Prostate gland (tissue), 2 donors: ENCODE measurements at regions of chr17 and their contacts with region 1.

Region 1: GRCh38 chr17:69607162-69607834 is 192.8 kb downstream of the MAP2K6 start:
- DNase-seq: peak; percentile 60
- H3K4me3 ChIP-seq: no peak overlapping the region
- H3K27ac ChIP-seq: no peak overlapping the region
- H3K4me1 ChIP-seq: no peaks in the 10 kb centered on the region
- H3K27me3 ChIP-seq: no peaks in the 10 kb centered on the region
- CTCF ChIP-seq: peak; percentile 65 to 87 (median 81)
- POLR2A ChIP-seq: no peak

Region 2: DNA sequence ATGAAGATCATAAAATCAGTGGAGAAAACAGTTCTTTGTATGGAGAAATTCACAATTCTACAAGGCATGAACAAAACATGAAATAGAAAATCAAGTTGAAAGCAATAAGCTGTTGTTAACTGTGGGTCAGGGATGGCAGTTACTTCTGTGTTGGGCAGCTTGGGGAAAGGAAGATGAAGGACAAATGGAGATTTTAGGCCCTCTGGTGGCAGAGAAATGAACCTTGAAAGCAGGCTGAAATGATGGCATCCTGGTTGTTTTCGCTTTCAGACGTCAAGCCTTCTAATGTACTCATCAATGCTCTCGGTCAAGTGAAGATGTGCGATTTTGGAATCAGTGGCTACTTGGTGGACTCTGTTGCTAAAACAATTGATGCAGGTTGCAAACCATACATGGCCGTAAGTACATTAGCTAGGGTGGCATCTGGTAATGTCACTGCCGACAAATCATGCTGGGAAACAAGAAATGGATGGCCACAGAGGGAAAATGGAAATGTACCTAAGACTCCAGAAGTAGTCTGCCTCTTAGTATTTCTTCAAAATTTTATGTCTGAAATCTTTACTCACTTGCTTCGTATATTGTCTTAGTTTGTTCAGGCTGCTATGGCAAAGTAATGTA is 83.9 kb before region 1 on chr17:
- intact Hi-C with region 1: no loop called
- DNase-seq: peak; percentile 37
- H3K4me3 ChIP-seq: no peak overlapping the region
- H3K27ac ChIP-seq: no peak overlapping the region
- H3K4me1 ChIP-seq: no peaks in the 10 kb centered on the region
- H3K27me3 ChIP-seq: no peaks in the 10 kb centered on the region
- CTCF ChIP-seq: peak; percentile 42 to 77 (median 74)
- POLR2A ChIP-seq: no peak

Region 3: DNA sequence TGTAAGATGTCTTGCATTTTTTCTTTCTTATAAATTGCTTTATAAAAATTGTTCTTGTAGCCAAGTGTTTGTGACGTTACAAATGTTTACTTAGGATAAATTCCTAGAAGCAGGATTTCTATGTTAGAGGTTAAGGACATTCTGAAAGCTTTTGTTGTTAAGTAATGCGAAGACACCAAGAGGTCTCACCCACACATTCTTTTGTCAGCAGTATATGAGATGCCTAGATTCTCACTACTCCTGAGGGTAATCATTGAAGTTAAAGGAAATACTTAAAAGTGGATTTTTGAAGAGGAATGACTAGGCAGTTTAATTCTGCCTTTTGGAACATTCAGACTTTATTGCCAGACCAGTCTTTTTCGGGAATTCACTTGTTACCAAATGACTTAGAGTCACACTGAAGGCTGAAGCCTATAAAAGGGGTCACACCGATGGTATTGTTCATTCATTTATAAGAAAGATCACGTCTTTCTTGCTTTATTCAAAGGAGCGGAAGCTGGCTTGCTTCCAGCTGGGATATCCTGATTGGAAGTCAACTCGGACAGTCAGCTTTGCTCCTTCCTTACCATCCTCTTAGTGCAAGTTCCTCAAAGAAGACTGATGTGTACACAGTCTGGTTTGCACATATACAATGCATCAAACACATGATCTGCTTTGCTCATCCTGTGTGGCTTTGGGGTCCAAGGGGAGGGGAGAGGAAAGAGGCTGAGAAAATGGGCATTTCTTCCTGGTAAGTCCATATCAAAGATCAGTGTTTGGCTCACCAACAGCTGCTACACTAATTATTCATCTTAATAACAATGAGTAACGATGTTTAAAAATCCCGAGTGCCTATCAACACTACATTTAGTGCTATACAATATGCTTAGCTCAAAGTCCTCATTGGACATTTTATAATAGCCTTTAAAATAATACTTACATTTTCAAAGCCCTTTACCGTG is 32.8 kb before region 1 on chr17:
- intact Hi-C with region 1: loop called (anchors 5 kb)
- DNase-seq: no peak
- H3K4me3 ChIP-seq: no peak overlapping the region
- H3K27ac ChIP-seq: no peak overlapping the region
- H3K4me1 ChIP-seq: no peaks in the 10 kb centered on the region
- H3K27me3 ChIP-seq: no peaks in the 10 kb centered on the region
- CTCF ChIP-seq: no peak
- POLR2A ChIP-seq: no peak

Region 4: DNA sequence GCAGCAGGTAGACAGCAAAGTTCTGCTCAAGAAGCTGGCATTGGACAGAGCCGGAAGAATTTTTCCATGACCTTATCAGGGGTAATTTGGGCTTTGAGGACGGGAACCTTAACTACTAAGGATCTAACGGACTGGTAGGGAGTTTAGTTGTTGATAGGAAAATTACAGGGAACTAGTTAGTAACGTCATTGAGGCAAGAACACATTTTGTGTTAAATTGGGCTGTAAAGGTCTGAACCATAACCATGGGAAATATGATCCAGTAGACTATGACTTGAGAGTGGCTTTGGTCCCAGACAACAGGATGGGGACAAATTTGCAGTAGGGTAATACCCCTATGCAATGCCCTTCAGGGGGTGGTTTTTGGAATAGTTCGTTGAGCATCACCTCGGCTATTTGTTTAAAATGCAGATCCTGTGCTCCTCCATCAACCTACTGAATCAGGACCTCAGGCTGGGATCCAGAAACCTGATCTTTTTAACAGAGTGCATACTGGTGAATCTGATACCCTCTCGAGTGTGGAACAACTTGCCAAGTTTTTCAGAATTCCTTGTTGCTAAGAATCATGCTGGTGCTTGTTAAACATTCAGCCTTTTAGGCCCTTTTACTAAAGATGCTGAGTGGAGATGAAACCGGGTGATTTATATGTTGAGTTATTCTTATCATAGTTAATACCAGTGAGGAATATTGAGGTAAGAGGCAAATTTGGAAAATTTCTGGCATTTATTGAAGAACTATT is 62.3 kb after region 1 on chr17:
- intact Hi-C with region 1: no loop called
- DNase-seq: peak; percentile 4
- H3K4me3 ChIP-seq: no peak overlapping the region
- H3K27ac ChIP-seq: no peak overlapping the region
- H3K4me1 ChIP-seq: no peaks in the 10 kb centered on the region
- H3K27me3 ChIP-seq: no peaks in the 10 kb centered on the region
- CTCF ChIP-seq: no peak
- POLR2A ChIP-seq: no peak

Region 5: DNA sequence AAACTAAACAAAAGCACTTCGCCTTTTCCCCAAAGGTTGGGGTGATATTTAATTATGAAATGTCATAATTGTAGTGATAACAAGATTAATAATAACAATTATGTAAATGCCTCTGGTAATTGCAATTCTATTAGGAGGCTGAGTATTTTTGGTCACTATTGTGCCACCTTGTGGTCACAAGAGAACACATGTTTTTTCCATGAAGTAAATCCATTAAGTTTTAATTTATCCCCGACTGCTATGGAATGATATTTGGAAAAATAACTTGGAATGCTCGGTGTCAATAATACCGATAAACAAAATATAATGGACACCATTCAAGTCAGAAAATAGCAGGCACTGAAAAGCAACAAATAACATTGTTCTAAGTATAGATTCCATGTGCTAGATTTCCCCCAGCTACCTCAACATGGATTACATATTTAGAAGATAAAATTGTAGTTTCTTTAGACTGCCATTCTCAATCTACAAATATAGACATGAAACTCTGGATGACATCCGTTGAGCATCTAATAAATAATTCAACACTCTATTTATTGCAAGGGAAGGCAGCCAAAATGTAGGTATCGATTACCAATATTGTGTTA is 537.1 kb after region 1 on chr17:
- intact Hi-C with region 1: loop called (anchors 2 kb)
- DNase-seq: no peak
- H3K4me3 ChIP-seq: no peak overlapping the region
- H3K27ac ChIP-seq: no peak overlapping the region
- H3K4me1 ChIP-seq: no peaks in the 10 kb centered on the region
- H3K27me3 ChIP-seq: no peaks in the 10 kb centered on the region
- CTCF ChIP-seq: peak; percentile 58 to 84 (median 80)
- POLR2A ChIP-seq: no peak